Testis (tissue), 5 donors: ENCODE measurements at regions of chr19 and their contacts with region 1.

Region 1: DNA sequence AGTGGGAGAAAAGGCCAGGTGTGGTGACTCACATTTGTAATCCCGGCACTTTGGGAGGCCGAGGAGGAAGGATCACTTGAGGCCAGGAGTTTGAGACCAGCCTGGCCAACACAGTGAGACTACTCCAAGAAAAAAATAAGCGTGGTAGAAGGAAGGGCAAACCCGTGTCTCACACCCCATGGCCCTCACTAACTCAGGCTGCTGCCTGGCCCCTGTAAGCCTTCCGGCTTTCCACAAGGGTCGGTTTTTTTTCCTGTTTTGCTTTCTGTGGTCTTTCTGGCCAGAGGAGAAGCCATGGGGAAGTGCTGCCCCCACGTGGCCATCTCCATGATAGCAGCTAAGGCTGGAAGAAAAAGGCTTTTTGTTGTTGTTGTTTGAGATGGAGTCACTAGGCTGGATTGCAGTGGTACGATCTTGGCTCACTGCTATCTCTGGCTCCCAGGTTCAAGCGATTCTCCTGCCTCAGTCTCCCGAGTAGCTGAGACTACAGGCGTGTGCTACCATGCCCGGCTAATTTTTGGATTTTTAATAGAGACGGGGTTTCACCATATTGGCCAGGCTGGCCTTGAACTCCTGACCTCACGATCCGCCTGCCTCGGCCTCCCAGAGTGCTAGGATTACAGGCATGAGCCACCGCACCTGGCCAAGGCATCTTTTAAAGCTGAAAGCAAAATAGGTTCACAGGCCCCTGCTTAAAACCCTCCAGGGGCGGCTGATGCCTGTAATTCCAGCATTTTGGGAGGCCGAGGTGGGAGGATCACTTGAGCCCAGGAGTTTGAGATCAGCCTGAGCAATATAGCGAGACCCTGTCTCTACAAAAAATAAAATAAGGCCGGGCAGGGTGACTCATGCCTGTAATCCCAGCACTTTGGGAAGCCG is 7.5 kb upstream of the ARHGEF18 start:
- DNase-seq: peak; percentile 90
- H3K4me3 ChIP-seq: no peak overlapping the region
- H3K27ac ChIP-seq: peak overlapping the region; percentile 37 to 40
- H3K4me1 ChIP-seq: peaks cover 4% of the 10 kb centered on the region
- H3K27me3 ChIP-seq: no peaks in the 10 kb centered on the region
- CTCF ChIP-seq: peak; percentile 92 to 94 (median 93)
- POLR2A ChIP-seq: no peak

Region 2: DNA sequence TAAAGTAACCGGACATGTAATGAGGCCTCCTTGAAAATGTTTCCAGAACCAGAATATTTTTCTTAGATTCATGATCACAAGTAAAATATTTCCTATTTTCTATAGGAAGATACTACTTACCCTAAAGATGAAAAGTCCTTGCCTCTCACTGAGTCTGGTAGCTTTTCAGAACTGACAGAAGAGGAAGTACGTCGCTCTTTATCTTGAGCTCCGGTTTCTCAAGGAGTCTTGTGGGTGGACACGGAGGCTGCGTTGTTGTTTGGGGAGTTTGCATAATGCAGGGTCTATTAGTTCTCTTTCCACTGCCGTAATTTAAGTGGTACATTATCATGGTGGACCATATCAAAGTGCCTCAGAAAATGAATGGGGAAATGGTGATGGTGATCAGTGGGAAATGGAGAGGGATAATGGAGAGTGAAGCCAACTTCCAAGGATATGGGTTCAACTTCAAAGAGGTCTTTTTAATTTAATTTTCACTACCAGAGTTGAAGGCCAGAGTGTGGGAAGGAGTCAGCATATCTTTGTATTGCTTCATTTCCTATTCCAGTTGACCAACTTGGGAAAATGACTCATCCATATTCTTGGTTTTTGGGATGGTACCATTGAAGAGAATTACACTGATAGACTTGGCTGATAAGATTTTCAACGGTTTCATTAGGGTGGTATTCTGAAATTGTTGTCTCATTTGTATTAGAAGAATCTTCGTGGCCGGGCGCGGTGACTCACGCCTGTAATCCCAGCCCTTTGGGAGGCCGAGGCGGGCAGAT is 343.3 kb before region 1 on chr19:
- intact Hi-C with region 1: no loop called
- DNase-seq: no peak
- H3K4me3 ChIP-seq: no peak overlapping the region
- H3K27ac ChIP-seq: no peak overlapping the region
- H3K4me1 ChIP-seq: no peaks in the 10 kb centered on the region
- H3K27me3 ChIP-seq: no peaks in the 10 kb centered on the region
- CTCF ChIP-seq: no peak
- POLR2A ChIP-seq: no peak

Region 3: GRCh38 chr19:7104747-7105447 is 236.3 kb before region 1 on chr19:
- intact Hi-C with region 1: loop called (anchors 10 kb)
- DNase-seq: no peak
- H3K4me3 ChIP-seq: no peak overlapping the region
- H3K27ac ChIP-seq: no peak overlapping the region
- H3K4me1 ChIP-seq: peaks cover 16% of the 10 kb centered on the region
- H3K27me3 ChIP-seq: no peaks in the 10 kb centered on the region
- CTCF ChIP-seq: no peak
- POLR2A ChIP-seq: no peak

Region 4: GRCh38 chr19:7152568-7152967 is 188.6 kb before region 1 on chr19:
- intact Hi-C with region 1: loop called (anchors 5 kb)
- DNase-seq: peak; percentile 32
- H3K4me3 ChIP-seq: no peak overlapping the region
- H3K27ac ChIP-seq: peak overlapping the region; percentile 2 to 31
- H3K4me1 ChIP-seq: no peaks in the 10 kb centered on the region
- H3K27me3 ChIP-seq: no peaks in the 10 kb centered on the region
- CTCF ChIP-seq: no peak
- POLR2A ChIP-seq: no peak

Region 5: GRCh38 chr19:7582446-7582845 is 241.2 kb after region 1 on chr19:
- intact Hi-C with region 1: no loop called
- DNase-seq: no peak
- H3K4me3 ChIP-seq: no peak overlapping the region
- H3K27ac ChIP-seq: no peak overlapping the region
- H3K4me1 ChIP-seq: peaks cover 12% of the 10 kb centered on the region
- H3K27me3 ChIP-seq: no peaks in the 10 kb centered on the region
- CTCF ChIP-seq: no peak
- POLR2A ChIP-seq: no peak